KBM-7 (cell line): ENCODE measurements at regions of chr6 and their contacts with region 1.

Region 1: GRCh38 chr6:105112577-105112976 is 67.2 kb downstream of the POPDC3 start:
- DNase-seq: no peak

Region 2: DNA sequence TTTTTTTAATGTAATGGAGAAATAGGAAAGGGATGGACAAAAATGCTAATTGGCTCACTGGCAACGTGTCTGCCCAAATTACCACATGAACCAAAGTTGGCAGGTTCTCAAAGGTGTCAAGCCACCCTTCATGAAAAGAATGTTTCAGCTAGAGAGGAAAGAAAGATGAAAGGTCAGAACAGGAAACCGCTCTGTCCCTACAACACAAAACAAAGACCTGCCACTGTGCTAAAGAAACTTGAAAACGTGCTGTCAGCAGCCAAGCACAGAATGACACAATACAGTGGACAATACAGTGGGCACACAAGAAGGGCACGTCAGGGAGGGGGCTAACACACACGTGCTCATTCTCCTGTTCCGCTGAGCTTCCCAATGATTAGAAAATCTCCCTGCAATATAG is 285.4 kb after region 1 on chr6:
- in situ Hi-C with region 1: loop called (anchors 25 kb)
- DNase-seq: no peak